ENCODE measurements at regions of chr17 and their contacts with region 1.

Region 1: GRCh38 chr17:35764123-35764991 is 3.7 kb downstream of the C17orf50 start:
- DNase-seq: peak; percentile 67 to 95 (median 86)
- ATAC-seq: peak; percentile 89
- H3K4me3 ChIP-seq: peak overlapping the region; percentile 70 to 86
- H3K4me3 Mint-ChIP-seq: peak overlapping the region; percentile 91
- H3K27ac ChIP-seq: peak overlapping the region; percentile 16 to 65
- H3K27ac Mint-ChIP-seq: peak overlapping the region; percentile 87
- H3K4me1 ChIP-seq: peaks cover 8% of the 10 kb centered on the region
- H3K4me1 Mint-ChIP-seq: peaks cover 10% of the 10 kb centered on the region
- H3K27me3 ChIP-seq: no peaks in the 10 kb centered on the region
- H3K27me3 Mint-ChIP-seq: no peaks in the 10 kb centered on the region
- CTCF ChIP-seq: peak; percentile 58

Region 2: DNA sequence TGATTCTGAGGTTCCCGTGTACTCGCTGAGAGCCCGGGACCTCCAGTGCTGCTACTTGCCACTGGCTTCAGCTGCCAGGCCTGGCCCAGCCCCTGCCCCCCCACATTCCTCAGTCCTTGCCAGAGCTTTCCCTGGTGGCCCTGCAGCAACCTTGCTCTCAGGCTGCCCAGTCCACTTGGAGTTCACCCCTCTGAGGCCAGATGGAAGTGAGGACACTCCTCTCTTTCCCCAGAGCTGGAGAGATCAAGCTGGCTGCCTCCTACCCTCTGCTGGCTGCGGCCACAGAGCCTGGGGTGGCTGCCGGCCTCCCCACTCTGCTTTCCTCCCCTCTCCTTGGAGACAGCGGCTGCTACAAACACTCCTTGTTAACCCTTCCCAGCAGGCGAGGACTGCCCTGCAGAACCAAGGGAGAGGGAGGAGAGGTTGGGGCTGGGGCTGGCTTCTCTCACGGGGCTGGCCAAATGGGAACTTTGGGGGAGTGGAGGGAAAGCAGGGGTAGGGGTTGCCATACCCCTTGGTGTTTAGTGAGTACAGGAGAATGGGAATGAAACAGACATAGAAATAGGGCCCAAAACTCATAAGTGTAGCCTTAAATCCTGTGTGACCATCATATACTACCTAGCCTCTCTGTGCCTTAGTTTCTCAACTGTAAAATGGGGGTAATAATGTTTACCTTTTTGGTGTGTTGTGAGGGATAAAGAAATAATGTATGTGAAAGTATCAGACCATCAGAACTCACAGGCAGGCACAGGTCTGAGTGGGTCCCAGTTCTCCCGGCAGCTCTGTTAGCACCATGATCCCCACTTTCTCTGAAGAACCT is 11.2 kb before region 1 on chr17 and contains the start of gene GAS2L2:
- CTCF ChIA-PET with region 1: interaction called, 27 read pairs
- POLR2A ChIA-PET with region 1: interaction called, 3 read pairs
- intact Hi-C with region 1: no loop called
- DNase-seq: no peak
- ATAC-seq: no peak
- H3K4me3 ChIP-seq: no peak within 1 kb of the TSS
- H3K4me3 Mint-ChIP-seq: no peak within 1 kb of the TSS
- H3K27ac ChIP-seq: no peak within 1 kb of the TSS
- H3K27ac Mint-ChIP-seq: no peak within 1 kb of the TSS
- H3K4me1 ChIP-seq: peaks cover 7% of the 10 kb centered on the region
- H3K4me1 Mint-ChIP-seq: peaks cover 4% of the 10 kb centered on the region
- H3K27me3 ChIP-seq: peaks cover 9 to 10% of the 10 kb centered on the region in 2 experiments
- H3K27me3 Mint-ChIP-seq: peaks cover 35% of the 10 kb centered on the region
- CTCF ChIP-seq: no peak
- total RNA-seq, gene GAS2L2: 0.17 to 0.27 TPM

Region 3: GRCh38 chr17:35788504-35789368 is 24.4 kb after region 1 on chr17:
- CTCF ChIA-PET with region 1: interaction called, 67 read pairs
- POLR2A ChIA-PET with region 1: interaction called, 7 read pairs
- intact Hi-C with region 1: no loop called
- DNase-seq: no peak
- ATAC-seq: no peak
- H3K4me3 ChIP-seq: no peak overlapping the region
- H3K4me3 Mint-ChIP-seq: peak overlapping the region; percentile 15
- H3K27ac ChIP-seq: no peak overlapping the region
- H3K27ac Mint-ChIP-seq: peak overlapping the region; percentile 21
- H3K4me1 ChIP-seq: peaks cover 21% of the 10 kb centered on the region
- H3K4me1 Mint-ChIP-seq: peaks cover 38% of the 10 kb centered on the region
- H3K27me3 ChIP-seq: no peaks in the 10 kb centered on the region
- H3K27me3 Mint-ChIP-seq: peaks cover 11% of the 10 kb centered on the region
- CTCF ChIP-seq: no peak

Region 4: GRCh38 chr17:35819456-35819855 is 55.1 kb after region 1 on chr17:
- CTCF ChIA-PET with region 1: interaction called, 16 read pairs
- POLR2A ChIA-PET with region 1: interaction called, 3 read pairs
- intact Hi-C with region 1: no loop called
- DNase-seq: no peak
- ATAC-seq: no peak
- H3K4me3 ChIP-seq: no peak overlapping the region
- H3K4me3 Mint-ChIP-seq: no peak overlapping the region
- H3K27ac ChIP-seq: no peak overlapping the region
- H3K27ac Mint-ChIP-seq: peak overlapping the region; percentile 64
- H3K4me1 ChIP-seq: peaks cover 5% of the 10 kb centered on the region
- H3K4me1 Mint-ChIP-seq: peaks cover 51% of the 10 kb centered on the region
- H3K27me3 ChIP-seq: no peaks in the 10 kb centered on the region
- H3K27me3 Mint-ChIP-seq: no peaks in the 10 kb centered on the region
- CTCF ChIP-seq: no peak

Measured in CD8-positive, alpha-beta T cell (primary cell).